Calu3 (cell line): ENCODE measurements at regions of chr9 and their contacts with region 1.

Region 1: GRCh38 chr9:121322037-121322775 is 47.8 kb downstream of the STOM start:
- DNase-seq: no peak
- H3K4me3 Mint-ChIP-seq: no peak overlapping the region
- H3K27ac Mint-ChIP-seq: peak overlapping the region; percentile 78
- H3K4me1 Mint-ChIP-seq: peaks cover 21% of the 10 kb centered on the region
- H3K27me3 Mint-ChIP-seq: no peaks in the 10 kb centered on the region
- CTCF ChIP-seq: no peak

Region 2: GRCh38 chr9:121267689-121268597 is 54.3 kb before region 1 on chr9 and contains the start of gene GSN:
- CTCF ChIA-PET with region 1: no interaction called
- intact Hi-C with region 1: no loop called
- DNase-seq: peak; percentile 69
- H3K4me3 Mint-ChIP-seq: peak within 1 kb of the TSS; percentile 81
- H3K27ac Mint-ChIP-seq: peak within 1 kb of the TSS; percentile 61
- H3K4me1 Mint-ChIP-seq: peaks cover 15% of the 10 kb centered on the region
- H3K27me3 Mint-ChIP-seq: no peaks in the 10 kb centered on the region
- CTCF ChIP-seq: no peak
- total RNA-seq, gene GSN: 68.3 and 71.6 TPM in 2 replicates

Region 3: GRCh38 chr9:121286973-121287741 is 35.0 kb before region 1 on chr9:
- CTCF ChIA-PET with region 1: interaction called, 8 read pairs
- intact Hi-C with region 1: loop called (anchors 5 kb)
- DNase-seq: peak; percentile 79
- H3K4me3 Mint-ChIP-seq: peak overlapping the region; percentile 52
- H3K27ac Mint-ChIP-seq: peak overlapping the region; percentile 99
- H3K4me1 Mint-ChIP-seq: peaks cover 62% of the 10 kb centered on the region
- H3K27me3 Mint-ChIP-seq: no peaks in the 10 kb centered on the region
- CTCF ChIP-seq: no peak

Region 4: GRCh38 chr9:121299467-121300234 is 22.6 kb before region 1 on chr9:
- CTCF ChIA-PET with region 1: no interaction called
- intact Hi-C with region 1: no loop called
- DNase-seq: no peak
- H3K4me3 Mint-ChIP-seq: peak overlapping the region; percentile 72
- H3K27ac Mint-ChIP-seq: peak overlapping the region; percentile 60
- H3K4me1 Mint-ChIP-seq: peaks cover 27% of the 10 kb centered on the region
- H3K27me3 Mint-ChIP-seq: no peaks in the 10 kb centered on the region
- CTCF ChIP-seq: no peak

Region 5: DNA sequence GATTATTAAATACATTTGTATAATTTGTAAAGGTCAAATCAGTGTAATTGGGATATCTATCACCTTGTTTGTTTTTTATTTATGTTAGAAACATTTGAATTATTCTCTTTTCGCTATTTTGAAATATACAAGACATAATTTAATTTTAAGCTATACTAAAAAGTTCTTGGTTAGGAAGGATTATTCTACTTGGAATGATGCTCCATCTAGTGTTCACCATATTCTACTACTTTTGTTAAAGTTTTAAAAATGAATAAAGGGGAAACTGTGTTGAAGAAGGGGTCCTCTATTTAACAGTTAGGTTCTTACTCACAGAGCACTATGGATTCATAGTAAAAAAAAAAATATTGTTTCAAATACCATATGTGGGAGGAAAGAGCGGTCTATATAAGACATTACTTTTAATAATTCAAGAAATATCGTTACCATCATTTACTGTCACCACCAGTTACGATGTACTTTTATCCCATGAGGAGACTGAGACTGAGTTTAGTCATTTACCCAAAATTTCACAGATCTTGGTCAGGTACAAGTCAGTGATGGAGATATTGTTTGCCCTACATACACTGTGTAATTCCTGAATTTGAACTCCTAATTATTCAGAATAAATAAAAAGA is 54.1 kb after region 1 on chr9:
- CTCF ChIA-PET with region 1: interaction called, 13 read pairs
- intact Hi-C with region 1: loop called (anchors 2 kb)
- DNase-seq: no peak
- H3K4me3 Mint-ChIP-seq: no peak overlapping the region
- H3K27ac Mint-ChIP-seq: no peak overlapping the region
- H3K4me1 Mint-ChIP-seq: peaks cover 21% of the 10 kb centered on the region
- H3K27me3 Mint-ChIP-seq: no peaks in the 10 kb centered on the region
- CTCF ChIP-seq: peak; percentile 12

Region 6: GRCh38 chr9:121399883-121400607 is 77.8 kb after region 1 on chr9:
- CTCF ChIA-PET with region 1: interaction called, 7 read pairs
- intact Hi-C with region 1: loop called (anchors 1 kb)
- DNase-seq: peak; percentile 5
- H3K4me3 Mint-ChIP-seq: no peak overlapping the region
- H3K27ac Mint-ChIP-seq: no peak overlapping the region
- H3K4me1 Mint-ChIP-seq: no peaks in the 10 kb centered on the region
- H3K27me3 Mint-ChIP-seq: no peaks in the 10 kb centered on the region
- CTCF ChIP-seq: peak; percentile 42